Stomach (tissue), 19 donors: ENCODE measurements at regions of chrX and their contacts with region 1.

Region 1: DNA sequence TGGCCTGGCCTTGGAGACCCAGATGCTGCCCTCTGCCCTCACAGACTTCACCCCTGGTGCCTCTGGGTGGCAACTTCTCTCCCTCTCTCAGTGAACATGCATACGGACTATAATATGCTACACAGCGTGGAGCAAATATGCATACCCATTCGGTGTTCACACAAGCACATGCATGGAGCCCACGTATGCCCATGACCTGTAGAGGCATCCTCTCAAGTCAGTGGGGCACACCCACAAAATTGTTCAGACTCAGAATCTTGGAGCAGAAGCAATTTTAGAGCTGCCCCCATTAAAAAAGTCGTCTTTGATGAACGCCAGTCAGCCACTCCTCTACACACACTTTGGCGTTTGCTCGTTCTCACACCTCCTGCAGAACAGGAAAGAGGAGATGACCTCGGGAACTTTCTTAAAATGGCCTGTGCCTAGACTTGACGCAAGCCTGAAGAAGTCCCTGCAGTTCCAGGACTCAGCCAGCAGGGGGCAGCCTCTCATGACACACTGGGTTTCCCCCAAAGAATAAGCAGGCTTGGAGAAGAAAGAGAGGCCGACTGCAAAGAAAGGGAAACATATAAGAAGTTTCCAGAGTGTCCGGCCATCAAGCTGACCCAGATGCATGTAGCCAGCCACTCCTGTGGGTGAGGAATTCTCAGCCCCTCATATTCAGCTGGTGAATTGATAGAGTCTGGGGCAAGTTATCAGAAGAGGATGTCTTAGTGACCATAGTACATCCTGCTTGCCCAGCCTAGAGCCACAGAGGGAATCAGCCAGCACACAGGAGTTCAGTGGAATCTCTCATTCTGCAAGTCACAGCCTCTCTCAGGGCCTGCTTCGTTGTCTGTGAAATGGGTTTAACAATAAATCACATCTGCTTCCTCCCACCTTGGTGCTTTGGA is 17.3 kb downstream of the APLN start:
- DNase-seq: peak; percentile 75 to 84
- H3K4me3 ChIP-seq: no peak overlapping the region
- H3K27ac ChIP-seq: no peak overlapping the region
- H3K4me1 ChIP-seq: no peaks in the 10 kb centered on the region
- H3K27me3 ChIP-seq: peaks cover 0 to 6% (median 0%) of the 10 kb centered on the region in 3 donors
- CTCF ChIP-seq: peak in 5 of 7 experiments; percentile 74 to 93 (median 86)
- EP300 ChIP-seq: no peak
- POLR2A ChIP-seq: no peak

Region 2: DNA sequence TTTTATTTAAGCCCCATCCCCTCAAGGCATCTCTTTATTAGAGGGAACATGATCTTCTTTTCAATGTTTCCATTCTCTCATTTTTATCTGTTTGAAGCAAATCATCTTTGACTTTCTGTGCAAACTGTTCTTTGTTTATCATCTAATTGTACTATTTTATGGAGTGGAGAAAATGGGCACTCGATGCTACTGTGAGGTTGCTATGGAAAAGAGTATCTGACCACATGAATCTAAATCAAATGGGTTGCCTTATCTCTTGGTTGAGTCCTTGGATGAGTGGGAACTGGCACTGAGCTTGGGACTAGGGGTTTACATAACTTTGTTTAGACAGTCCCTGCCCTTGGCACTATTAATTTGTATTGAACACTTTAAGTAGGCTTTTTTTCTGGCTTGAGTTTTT is 88.3 kb before region 1 on chrX:
- intact Hi-C with region 1: no loop called
- DNase-seq: no peak
- H3K4me3 ChIP-seq: no peak overlapping the region
- H3K27ac ChIP-seq: no peak overlapping the region
- H3K4me1 ChIP-seq: no peaks in the 10 kb centered on the region
- H3K27me3 ChIP-seq: peaks cover 0 to 3% (median 0%) of the 10 kb centered on the region in 3 donors
- CTCF ChIP-seq: no peak
- EP300 ChIP-seq: no peak
- POLR2A ChIP-seq: no peak

Region 3: DNA sequence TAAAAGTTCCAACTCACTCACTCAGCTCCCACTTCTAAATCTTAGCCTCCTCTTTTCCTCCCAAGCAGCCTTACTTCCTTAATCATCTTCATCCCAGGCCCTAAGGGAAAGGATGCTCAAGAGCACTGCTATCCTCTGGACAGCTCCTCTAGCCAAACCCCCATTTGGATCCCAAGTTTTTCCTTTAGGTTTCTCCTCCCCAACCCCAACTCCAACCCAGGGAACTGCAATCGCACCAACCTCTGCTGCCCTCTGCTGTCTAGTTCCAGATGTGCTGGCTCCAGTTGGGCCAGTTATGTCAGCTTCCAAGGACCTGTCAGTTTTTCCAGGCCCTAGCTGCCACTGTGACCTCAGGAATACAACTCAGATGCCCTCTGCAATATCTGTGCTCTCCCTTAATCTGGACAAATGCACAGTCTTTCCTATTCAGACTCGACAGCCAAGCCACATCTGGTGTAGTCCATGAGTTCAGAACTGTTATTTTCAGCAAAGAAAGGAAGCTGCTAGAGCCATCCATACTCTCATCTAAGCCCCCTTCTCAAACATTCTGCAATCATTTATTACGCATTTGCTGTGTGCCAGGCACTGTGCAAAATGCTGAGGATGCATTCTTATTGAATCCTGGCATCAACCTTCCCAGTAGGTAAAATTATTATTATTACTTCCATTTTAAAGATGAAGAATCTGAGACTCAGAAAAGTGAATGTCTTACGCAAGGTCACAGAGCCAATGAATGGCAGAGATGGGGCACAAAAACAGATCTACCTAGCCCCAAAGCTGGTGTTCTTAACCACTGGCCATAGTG is 89.0 kb after region 1 on chrX:
- intact Hi-C with region 1: loop called (anchors 5 kb)
- DNase-seq: peak; percentile 65 to 78
- H3K4me3 ChIP-seq: no peak overlapping the region
- H3K27ac ChIP-seq: no peak overlapping the region
- H3K4me1 ChIP-seq: no peaks in the 10 kb centered on the region
- H3K27me3 ChIP-seq: no peaks in the 10 kb centered on the region
- CTCF ChIP-seq: peak in 5 of 7 experiments; percentile 42 to 76 (median 48)
- EP300 ChIP-seq: no peak
- POLR2A ChIP-seq: no peak